ENCODE measurements at regions of chr11 and their contacts with region 1.

Region 1: DNA sequence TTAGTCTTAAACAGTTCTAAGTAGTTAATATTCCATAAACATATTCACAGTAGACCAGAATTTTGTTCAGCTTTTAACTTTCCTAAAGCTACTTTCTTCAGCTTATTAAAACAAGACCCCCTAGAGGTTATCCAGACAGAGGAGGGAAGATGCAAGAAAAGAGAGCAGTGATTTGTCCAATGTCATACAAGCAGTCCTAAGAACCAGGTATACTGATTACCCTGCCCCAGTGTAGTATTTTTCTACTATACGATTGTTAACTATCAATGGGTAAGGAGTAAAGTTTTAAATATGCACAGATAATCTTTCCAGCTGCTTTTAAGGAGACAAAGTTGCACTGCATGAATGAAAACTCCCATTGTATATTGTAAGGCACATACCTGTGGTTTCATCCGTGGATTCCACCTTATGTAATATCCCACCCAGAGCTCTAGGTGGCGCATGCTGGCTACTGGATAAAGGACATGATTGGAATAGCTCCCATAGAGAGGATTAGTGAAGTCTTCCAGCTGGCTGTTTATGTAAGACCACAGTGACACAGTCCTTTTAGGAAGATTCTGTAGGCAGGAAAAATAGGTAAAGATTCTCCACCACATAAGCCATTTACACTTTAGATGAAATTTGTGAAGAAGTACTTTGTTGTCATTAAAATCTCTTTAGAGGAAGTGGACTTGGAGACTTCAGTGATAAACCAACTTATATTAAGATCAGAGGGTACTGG is 45.6 kb downstream of the CEP57 start:
- DNase-seq: peak; percentile 56
- H3K4me3 ChIP-seq: no peak overlapping the region
- H3K27ac ChIP-seq: peak overlapping the region in 2 of 4 donors; percentile 33 to 35
- H3K4me1 ChIP-seq: peaks cover 0 to 4% (median 0%) of the 10 kb centered on the region in 4 donors
- H3K27me3 ChIP-seq: no peaks in the 10 kb centered on the region
- CTCF ChIP-seq: peak; percentile 78 to 89 (median 88)
- EP300 ChIP-seq: no peak
- POLR2A ChIP-seq: no peak

Region 2: DNA sequence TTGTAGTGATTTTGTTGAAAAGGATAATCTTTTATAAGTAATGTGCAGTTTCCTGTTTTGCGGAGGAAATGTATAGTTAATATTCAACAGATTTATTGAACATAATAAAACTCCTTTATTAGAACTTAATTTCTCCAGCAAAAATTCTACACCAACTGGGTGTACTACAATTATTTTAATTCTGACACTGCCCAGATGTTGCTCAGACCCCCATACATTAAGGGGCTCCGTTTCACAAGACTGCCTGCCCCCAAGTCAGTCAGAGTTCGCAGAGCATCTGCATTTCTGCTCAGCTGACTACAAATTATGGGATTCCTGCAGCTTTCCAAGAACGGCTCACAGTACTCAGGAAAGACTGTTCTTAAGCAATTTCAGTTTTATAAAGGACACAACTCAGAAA is 39.4 kb before region 1 on chr11:
- in situ Hi-C with region 1: no loop called
- intact Hi-C with region 1: no loop called
- DNase-seq: no peak
- H3K4me3 ChIP-seq: no peak overlapping the region
- H3K27ac ChIP-seq: no peak overlapping the region
- H3K4me1 ChIP-seq: peaks cover 3 to 22% (median 13%) of the 10 kb centered on the region in 4 donors
- H3K27me3 ChIP-seq: no peaks in the 10 kb centered on the region
- CTCF ChIP-seq: no peak
- EP300 ChIP-seq: no peak
- POLR2A ChIP-seq: no peak

Region 3: DNA sequence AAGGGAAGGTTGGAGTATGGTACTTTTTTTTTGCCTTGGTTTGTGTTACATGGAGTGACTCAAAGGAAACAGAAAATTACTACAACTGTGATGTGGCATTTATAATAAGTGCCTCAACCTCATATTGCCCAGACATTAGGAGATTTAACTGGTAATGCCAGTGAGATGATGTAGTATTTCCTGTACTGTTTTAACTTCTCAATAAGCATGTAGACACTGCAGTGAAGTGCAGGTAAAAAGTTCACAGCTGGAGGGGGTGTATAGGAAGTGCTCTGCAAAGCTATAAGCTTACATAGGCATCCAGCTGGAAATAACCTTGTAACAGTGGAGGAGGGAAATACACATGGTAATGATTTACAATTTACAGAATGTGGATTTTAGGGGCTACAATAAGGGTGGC is 226.2 kb after region 1 on chr11:
- in situ Hi-C with region 1: no loop called
- intact Hi-C with region 1: no loop called
- DNase-seq: no peak
- H3K4me3 ChIP-seq: no peak overlapping the region
- H3K27ac ChIP-seq: no peak overlapping the region
- H3K4me1 ChIP-seq: peaks cover 0 to 2% (median under 1%) of the 10 kb centered on the region in 4 donors
- H3K27me3 ChIP-seq: no peaks in the 10 kb centered on the region
- CTCF ChIP-seq: no peak
- EP300 ChIP-seq: no peak
- POLR2A ChIP-seq: no peak

Region 4: DNA sequence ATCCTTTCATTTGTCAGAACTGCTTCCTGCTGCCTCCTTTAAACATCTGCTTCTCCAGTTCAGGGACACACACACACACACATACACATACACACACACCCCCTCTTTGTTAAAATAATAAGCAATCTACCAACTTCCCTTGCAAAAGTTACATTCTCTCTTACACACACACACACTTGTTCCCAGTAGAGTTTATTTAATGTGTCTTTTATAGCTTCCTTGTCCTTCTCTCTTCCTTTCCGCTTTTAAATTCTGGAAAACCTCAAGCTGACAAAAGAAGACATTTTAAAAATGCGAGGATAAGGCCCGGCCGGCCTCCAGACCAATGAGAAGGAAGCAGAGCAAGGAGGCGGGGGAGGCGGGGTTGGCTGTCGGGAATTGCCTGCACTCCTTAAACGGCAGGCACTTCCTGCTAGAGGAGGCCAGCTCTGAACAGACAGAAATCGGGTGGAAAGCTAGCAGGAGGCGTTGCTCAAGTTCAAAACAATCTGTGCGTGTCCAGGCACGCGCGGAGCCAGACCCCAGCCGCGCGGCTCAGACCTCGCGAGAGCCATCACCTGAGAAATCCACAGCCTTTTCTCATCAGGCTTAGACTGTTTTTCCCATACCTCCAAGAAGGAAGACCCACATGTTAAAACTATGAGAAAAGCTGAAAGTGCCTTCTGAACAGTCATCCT is 407.2 kb after region 1 on chr11:
- in situ Hi-C with region 1: no loop called
- intact Hi-C with region 1: loop called (anchors 5 kb)
- DNase-seq: peak; percentile 94
- H3K4me3 ChIP-seq: peak overlapping the region in 3 of 4 donors; percentile 37 to 54 (median 43)
- H3K27ac ChIP-seq: peak overlapping the region; percentile 85 to 93 (median 92)
- H3K4me1 ChIP-seq: peaks cover 20 to 48% (median 34%) of the 10 kb centered on the region in 4 donors
- H3K27me3 ChIP-seq: no peaks in the 10 kb centered on the region
- CTCF ChIP-seq: no peak
- EP300 ChIP-seq: no peak
- POLR2A ChIP-seq: peak; percentile 75

Region 5: DNA sequence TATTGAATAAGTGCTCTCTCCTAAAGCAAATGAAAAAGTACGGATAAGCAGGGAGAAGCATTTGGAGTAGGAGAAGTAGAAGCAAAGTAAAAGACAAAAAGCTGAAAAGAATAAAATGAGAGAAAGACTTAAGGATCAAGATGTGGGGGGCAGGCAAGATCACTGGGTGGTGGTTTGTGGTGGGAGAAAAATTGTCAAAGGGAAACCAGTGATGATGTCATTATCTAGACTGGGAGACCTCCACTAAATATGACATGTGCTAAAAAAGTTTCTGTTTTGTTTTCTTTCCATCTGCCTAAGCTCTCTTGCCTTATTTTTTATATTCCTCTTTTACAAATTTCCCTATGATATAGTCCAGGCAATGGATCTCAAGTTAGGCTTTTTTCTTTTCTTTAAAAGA is 521.9 kb after region 1 on chr11:
- in situ Hi-C with region 1: loop called in 3 of 4 experiments (anchors 25 kb)
- intact Hi-C with region 1: no loop called
- DNase-seq: no peak
- H3K4me3 ChIP-seq: no peak overlapping the region
- H3K27ac ChIP-seq: no peak overlapping the region
- H3K4me1 ChIP-seq: no peaks in the 10 kb centered on the region
- H3K27me3 ChIP-seq: no peaks in the 10 kb centered on the region
- CTCF ChIP-seq: no peak
- EP300 ChIP-seq: no peak
- POLR2A ChIP-seq: no peak

Region 6: DNA sequence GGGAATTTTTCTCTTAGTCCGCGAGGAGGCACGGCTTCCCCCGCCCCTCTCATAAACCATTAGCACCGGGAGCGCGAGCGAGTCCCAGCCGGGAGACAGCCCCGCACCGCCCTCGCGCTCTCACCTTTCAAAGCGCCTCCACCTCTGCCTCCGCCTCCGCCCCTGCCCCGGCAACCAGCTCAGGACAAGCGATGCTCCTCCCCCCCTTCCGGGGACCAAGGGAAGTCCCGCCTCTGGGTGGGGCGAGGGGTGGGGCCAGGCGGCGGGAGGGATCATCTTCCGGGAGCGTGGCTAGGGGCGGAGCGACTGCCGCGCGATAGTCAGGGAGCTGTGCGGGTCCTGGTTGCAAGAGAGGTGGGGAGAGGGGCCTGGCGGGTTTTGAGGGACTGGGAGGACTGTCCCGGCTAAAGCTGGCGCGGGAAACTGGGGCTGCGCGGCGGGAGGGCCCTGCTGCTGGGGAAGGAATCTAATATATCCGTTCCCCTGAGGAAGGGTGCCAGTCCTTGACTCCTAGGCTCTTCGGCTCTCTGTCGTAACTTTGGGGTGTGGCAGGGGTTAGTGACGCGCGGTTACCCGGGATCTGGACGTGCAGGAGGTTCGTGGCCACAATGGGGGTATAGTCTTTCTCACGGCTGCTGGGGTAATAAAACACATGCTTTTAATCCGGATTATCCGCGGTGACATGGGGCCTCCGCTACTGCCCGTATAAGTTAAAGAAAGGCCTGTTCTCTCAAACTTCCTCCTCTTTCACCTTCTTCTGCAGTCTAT is 554.0 kb after region 1 on chr11 and contains the starts of genes CCDC82 and JRKL:
- in situ Hi-C with region 1: loop called in 1 of 4 experiments (anchors 25 kb)
- intact Hi-C with region 1: no loop called
- DNase-seq: peak; percentile 99
- H3K4me3 ChIP-seq: peak within 1 kb of the TSS; percentile 77 to 90 (median 84)
- H3K27ac ChIP-seq: peak within 1 kb of the TSS; percentile 87 to 91 (median 90)
- H3K4me1 ChIP-seq: peaks cover 5 to 23% (median 17%) of the 10 kb centered on the region in 4 donors
- H3K27me3 ChIP-seq: no peaks in the 10 kb centered on the region
- CTCF ChIP-seq: no peak
- EP300 ChIP-seq: no peak
- POLR2A ChIP-seq: peak; percentile 96
- total RNA-seq, gene CCDC82: 9.6 to 41.1 (median 23.8) TPM
- total RNA-seq, gene JRKL: 1.1 to 210 (median 8.2) TPM

Measured in transverse colon (tissue), 4 donors.